Activated CD8-positive, alpha-beta T cell treated with anti-CD3 and anti-CD28 coated beads, Interleukin-2, amount 10 ng/mL, durations not matched to agents 7 days and 5 days (primary cell): ENCODE measurements at regions of chr10 and their contacts with region 1.

Region 1: DNA sequence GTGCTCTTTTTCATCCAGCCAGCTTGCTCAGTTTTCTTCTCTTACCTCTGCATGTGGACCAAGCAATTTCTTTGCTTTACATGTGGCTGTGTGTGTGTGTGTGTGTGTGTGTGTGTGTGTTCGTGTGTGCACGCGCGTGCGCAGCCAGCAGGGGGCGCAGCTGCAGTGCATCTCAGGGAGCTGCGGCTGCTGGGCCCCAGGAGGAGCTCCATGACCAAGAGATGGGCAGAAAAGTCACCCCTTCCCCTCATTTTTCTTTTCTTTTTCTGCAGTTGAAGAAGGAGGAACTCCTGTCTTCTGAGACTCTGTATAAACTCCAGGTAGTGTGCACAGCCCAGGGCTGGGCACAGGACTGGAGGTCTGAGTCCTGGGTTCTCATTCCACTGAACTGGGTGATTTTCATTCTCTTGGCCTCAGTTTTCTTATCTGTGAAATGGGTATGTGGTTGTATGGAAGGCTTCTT is 41.8 kb downstream of the BLNK start:
- DNase-seq: peak; percentile 77
- ATAC-seq: peak; percentile 86
- H3K4me3 Mint-ChIP-seq: no peak overlapping the region
- H3K27ac Mint-ChIP-seq: no peak overlapping the region
- H3K4me1 Mint-ChIP-seq: no peaks in the 10 kb centered on the region
- H3K27me3 Mint-ChIP-seq: peaks cover 2% of the 10 kb centered on the region

Region 2: DNA sequence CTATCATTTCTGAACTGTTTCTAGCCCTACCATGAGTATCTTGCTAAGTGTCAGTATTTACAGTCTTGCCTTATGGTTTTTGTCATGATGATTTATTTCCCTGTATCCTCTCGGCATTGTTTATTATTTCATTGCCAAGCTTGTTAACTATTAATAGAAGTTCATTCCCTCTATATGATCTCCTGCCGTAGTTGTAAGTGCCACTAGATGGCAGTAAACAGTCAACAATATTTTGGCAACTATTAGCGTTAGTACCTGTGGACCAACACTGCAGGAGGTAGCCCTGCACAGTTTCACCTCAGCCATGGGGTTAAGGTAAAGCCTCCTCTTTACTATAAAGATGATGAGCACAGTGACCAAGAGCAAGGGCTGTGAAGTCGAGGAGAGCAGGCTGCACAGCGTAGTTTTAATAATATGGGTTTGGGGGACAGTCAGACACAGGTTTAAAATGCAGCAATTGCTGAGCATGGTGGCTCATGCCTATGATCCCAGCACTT is 212.4 kb before region 1 on chr10:
- CTCF ChIA-PET with region 1: interaction called, 20 read pairs
- POLR2A ChIA-PET with region 1: no interaction called
- DNase-seq: peak; percentile 65
- ATAC-seq: peak; percentile 95
- H3K4me3 Mint-ChIP-seq: no peak overlapping the region
- H3K27ac Mint-ChIP-seq: no peak overlapping the region
- H3K4me1 Mint-ChIP-seq: no peaks in the 10 kb centered on the region
- H3K27me3 Mint-ChIP-seq: peaks cover 2% of the 10 kb centered on the region

Region 3: DNA sequence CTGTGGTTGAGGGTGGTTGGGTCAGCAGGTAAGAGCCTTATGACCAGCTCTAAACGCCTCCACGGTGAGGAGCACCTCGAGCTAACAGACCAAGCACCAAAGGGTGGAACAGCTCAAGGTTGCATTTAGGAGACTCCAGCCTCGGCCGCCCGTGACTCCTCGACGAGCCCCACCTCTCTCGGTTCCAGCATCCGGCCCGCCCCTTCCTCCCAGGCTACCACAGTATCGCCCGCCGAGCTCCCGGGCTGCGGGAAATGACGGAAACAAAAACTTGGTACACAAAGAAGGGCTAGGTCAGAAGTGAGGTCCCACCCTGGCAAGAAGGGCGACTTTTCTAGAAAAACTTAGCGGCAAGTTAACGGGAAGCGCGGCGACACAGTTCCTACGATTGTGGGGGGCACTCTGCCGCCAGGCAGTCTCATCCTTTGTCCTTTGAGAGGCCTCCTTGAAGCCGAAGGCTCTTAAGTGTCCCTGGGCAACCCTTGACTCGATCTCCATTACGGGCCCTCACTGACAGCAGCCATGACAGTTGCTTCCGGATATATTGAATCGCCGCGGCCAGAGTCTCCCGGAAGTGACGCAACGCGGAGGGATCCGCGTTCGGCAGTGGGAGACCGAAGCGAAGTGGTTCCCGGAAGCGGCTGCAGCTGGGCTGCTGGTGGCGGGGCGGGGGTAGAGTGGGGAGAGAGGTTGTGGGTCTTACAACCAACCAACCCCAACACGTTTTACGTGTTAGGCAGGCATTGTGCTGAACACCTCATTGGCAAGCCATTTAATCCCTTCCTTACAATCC is 139.7 kb before region 1 on chr10:
- CTCF ChIA-PET with region 1: no interaction called
- POLR2A ChIA-PET with region 1: no interaction called
- DNase-seq: peak; percentile 94
- ATAC-seq: peak; percentile 93
- H3K4me3 Mint-ChIP-seq: peak overlapping the region; percentile 96
- H3K27ac Mint-ChIP-seq: peak overlapping the region; percentile 100
- H3K4me1 Mint-ChIP-seq: peaks cover 17% of the 10 kb centered on the region
- H3K27me3 Mint-ChIP-seq: peaks cover 17% of the 10 kb centered on the region

Region 4: GRCh38 chr10:96244354-96244753 is 14.8 kb after region 1 on chr10:
- CTCF ChIA-PET with region 1: interaction called, 13 read pairs
- POLR2A ChIA-PET with region 1: no interaction called
- DNase-seq: no peak
- ATAC-seq: no peak
- H3K4me3 Mint-ChIP-seq: no peak overlapping the region
- H3K27ac Mint-ChIP-seq: no peak overlapping the region
- H3K4me1 Mint-ChIP-seq: no peaks in the 10 kb centered on the region
- H3K27me3 Mint-ChIP-seq: peaks cover 9% of the 10 kb centered on the region

Region 5: GRCh38 chr10:96292971-96293920 is 63.6 kb after region 1 on chr10:
- CTCF ChIA-PET with region 1: interaction called, 140 read pairs
- POLR2A ChIA-PET with region 1: no interaction called
- DNase-seq: peak; percentile 30
- ATAC-seq: no peak
- H3K4me3 Mint-ChIP-seq: no peak overlapping the region
- H3K27ac Mint-ChIP-seq: no peak overlapping the region
- H3K4me1 Mint-ChIP-seq: peaks cover 13% of the 10 kb centered on the region
- H3K27me3 Mint-ChIP-seq: peaks cover 9% of the 10 kb centered on the region

Region 6: DNA sequence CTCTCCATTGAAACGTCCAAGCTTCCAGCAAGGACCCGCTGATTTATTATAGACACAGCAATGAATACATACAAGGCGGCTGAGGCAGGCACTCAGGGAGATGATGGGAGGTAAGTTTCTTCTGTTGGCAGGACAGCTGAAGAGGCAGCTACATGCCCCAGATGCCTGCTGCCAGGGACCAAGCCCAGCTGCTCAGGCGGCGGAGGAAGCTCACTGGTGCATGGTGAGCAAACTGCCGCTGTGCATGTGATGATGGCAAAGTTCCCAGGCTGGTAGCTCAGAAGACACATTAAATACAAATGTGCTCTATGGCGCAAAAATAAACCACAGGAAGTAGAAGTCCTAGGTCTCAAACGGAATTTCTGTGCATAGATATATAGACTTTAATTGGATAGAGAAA is 76.9 kb after region 1 on chr10:
- CTCF ChIA-PET with region 1: interaction called, 40 read pairs
- POLR2A ChIA-PET with region 1: no interaction called
- DNase-seq: no peak
- ATAC-seq: no peak
- H3K4me3 Mint-ChIP-seq: no peak overlapping the region
- H3K27ac Mint-ChIP-seq: no peak overlapping the region
- H3K4me1 Mint-ChIP-seq: peaks cover 4% of the 10 kb centered on the region
- H3K27me3 Mint-ChIP-seq: peaks cover 21% of the 10 kb centered on the region

Region 7: DNA sequence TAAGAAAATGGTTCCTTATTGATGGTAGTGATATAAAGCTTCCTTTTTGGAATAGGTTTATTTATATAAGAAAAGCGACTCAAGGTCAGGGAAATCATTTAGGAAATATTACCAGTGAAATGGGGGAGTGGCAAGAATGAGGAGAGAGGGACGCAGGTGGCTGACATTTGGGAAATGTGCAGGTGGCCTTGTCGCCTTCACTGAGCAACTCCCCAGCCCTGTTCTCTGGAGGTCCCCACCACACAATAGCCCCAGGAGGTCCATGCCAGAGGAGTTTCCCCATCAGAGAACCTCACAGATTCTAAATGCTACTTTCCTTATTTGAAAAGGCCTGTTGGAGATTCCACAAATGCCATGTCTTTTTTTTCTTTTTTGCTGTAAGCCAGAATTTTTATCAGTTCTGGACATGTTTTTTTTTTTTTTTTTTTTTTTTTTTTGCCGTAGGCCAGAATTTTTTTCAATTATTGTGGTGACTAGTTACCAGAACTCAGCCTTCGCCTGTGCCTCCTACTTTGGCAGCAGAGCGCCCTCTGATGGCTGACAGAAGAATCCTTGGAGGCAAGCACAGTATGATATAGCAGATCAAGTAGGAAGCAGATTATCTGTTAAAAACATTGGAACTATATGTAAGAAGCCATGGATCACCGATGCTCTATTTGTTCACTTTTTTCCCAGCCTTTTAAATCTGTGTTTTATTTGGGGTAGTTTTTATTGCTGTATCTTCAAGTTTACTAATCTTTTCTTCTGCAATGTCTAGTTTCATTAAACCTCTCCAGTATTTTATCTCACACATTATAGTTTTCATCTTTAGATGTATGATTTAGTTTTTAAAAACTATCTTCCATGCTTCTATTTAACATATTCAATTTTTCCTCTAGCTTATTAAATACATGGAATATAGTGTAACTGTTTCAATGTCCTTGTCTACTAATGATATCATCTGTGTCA is 110.6 kb after region 1 on chr10:
- CTCF ChIA-PET with region 1: interaction called, 43 read pairs
- POLR2A ChIA-PET with region 1: no interaction called
- DNase-seq: peak; percentile 71
- ATAC-seq: peak; percentile 76
- H3K4me3 Mint-ChIP-seq: no peak overlapping the region
- H3K27ac Mint-ChIP-seq: no peak overlapping the region
- H3K4me1 Mint-ChIP-seq: no peaks in the 10 kb centered on the region
- H3K27me3 Mint-ChIP-seq: no peaks in the 10 kb centered on the region

Region 8: GRCh38 chr10:96470116-96470743 is 240.6 kb after region 1 on chr10:
- CTCF ChIA-PET with region 1: no interaction called
- POLR2A ChIA-PET with region 1: no interaction called
- DNase-seq: peak; percentile 45
- ATAC-seq: peak; percentile 67
- H3K4me3 Mint-ChIP-seq: no peak overlapping the region
- H3K27ac Mint-ChIP-seq: no peak overlapping the region
- H3K4me1 Mint-ChIP-seq: no peaks in the 10 kb centered on the region
- H3K27me3 Mint-ChIP-seq: peaks cover 11% of the 10 kb centered on the region